Aorta (tissue), 5 donors: ENCODE measurements at regions of chr16 and their contacts with region 1.

Region 1: GRCh38 chr16:50338371-50339231 is 30.2 kb downstream of the BRD7 start:
- DNase-seq: no peak
- ATAC-seq: no peak
- H3K4me3 ChIP-seq: no peak overlapping the region
- H3K27ac ChIP-seq: peak overlapping the region in 1 of 2 donors; percentile 68
- H3K4me1 ChIP-seq: peaks cover 3 to 12% of the 10 kb centered on the region in 2 donors
- H3K27me3 ChIP-seq: no peaks in the 10 kb centered on the region

Region 2: DNA sequence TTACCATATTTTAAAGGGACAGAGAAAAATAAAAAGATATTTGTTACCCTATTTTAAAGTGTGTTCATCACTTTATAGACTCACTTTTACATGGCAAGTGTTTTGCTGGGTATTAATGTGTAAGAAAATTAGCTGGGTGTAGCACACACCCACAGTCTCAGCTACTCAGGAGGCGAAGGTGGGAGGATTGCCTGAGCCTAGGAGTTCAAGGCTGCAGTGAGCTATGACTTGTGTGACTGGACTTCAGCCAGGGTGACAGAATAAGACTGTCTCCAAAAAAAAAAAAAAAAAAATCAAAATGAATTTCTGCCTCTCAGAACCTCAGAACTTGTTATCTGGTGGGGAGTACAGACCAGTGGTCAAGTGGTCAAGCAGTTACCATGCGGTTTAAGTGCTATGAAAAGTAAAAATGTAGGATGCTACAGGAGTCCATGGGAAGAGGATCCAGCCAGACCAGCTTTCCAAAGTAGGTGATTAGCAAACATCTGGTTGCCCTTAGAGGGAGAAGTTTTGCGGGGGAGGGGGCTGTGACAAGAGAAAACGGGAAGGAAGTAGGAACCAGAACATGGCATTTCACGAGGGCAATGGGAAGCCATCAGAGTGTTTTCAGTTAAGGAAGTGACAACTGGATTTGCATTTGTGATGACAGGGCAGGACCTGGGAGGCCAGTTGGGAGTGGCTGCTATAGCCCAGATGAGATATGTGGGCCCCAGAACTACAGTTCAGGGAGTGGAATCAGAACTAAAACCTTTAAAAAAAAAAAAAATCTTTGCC is 299.7 kb before region 1 on chr16:
- intact Hi-C with region 1: no loop called
- DNase-seq: peak in 1 of 2 donors; percentile 81
- ATAC-seq: peak; percentile 64
- H3K4me3 ChIP-seq: no peak overlapping the region
- H3K27ac ChIP-seq: no peak overlapping the region
- H3K4me1 ChIP-seq: no peaks in the 10 kb centered on the region
- H3K27me3 ChIP-seq: no peaks in the 10 kb centered on the region

Region 3: DNA sequence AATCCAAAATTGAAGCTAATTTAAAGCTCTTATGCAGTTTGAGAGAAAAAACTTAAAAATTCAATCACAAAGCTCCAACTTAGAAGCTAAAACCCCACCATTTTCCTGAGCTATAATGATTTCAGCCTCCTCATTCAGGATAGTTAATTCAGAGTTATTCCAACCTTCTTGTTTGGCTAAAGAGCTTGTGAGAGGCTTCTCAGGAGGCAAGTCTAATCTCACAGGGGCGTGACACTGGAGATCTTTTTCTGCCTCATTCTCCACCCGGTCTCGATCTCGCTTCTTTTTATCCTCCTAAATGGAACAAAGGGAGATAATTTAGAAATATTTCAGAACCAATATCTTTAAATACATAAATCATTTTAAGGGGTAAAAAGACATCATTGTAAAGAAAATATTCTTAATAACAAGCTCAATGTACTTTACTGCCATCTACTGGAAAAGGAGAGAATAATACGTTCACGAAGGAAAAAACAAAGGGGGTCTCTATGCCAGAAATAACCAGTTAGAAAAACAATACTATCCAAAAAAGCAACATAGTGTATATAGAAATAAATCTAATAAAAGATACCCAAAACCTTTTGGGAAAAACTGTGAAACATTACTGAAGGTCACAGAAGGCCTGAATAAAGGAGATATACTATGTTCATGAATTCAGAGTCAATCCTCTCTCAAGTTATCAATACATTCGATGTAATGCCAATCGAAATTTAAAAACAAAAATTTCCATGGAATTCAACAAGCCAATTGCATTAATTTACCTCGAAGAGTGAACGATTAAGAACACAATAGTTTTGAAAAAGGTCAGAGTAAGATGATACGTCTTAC is 16.2 kb after region 1 on chr16:
- intact Hi-C with region 1: loop called in 1 of 2 experiments (anchors 1 kb)
- DNase-seq: no peak
- ATAC-seq: no peak
- H3K4me3 ChIP-seq: no peak overlapping the region
- H3K27ac ChIP-seq: no peak overlapping the region
- H3K4me1 ChIP-seq: no peaks in the 10 kb centered on the region
- H3K27me3 ChIP-seq: no peaks in the 10 kb centered on the region